ENCODE measurements at regions of chr5 and their contacts with region 1.

Region 1: DNA sequence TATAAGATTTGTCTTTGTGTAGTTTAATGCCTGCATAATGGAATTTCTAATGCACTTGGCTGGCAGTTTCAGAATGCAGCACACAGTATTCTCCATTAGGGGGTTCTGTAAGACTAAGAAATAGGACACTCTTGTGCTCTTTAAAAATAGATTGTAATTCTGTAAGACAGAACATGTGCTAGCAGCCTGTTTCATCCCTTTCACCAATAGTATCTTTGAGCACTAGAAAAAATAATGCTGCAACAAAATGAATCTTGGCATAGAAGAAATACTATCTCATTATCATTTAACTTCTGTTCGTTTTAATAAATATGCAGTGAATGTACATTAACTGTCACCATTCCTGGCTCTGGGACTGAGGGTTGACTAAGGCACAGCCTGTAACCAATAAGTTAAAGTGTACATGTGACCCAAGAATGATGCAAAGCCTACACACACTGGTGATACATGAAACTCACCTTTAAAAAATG is 23.8 kb upstream of the ZNF622 start:
- DNase-seq: peak in 2 of 3 donors; percentile 27 to 39
- H3K4me3 ChIP-seq: no peak overlapping the region
- H3K4me3 Mint-ChIP-seq: no peak overlapping the region
- H3K27ac ChIP-seq: no peak overlapping the region
- H3K27ac Mint-ChIP-seq: no peak overlapping the region
- H3K4me1 ChIP-seq: no peaks in the 10 kb centered on the region
- H3K4me1 Mint-ChIP-seq: no peaks in the 10 kb centered on the region
- H3K27me3 ChIP-seq: no peaks in the 10 kb centered on the region
- H3K27me3 Mint-ChIP-seq: peaks cover 0 to 2% (median 1%) of the 10 kb centered on the region in 3 donors
- CTCF ChIP-seq: peak; percentile 61

Region 2: GRCh38 chr5:16508730-16509531 is 19.6 kb after region 1 on chr5:
- intact Hi-C with region 1: no loop called
- DNase-seq: peak; percentile 53 to 81 (median 61)
- H3K4me3 ChIP-seq: peak overlapping the region; percentile 7 to 62 (median 39)
- H3K4me3 Mint-ChIP-seq: peak overlapping the region; percentile 73 to 83
- H3K27ac ChIP-seq: peak overlapping the region; percentile 68 to 79
- H3K27ac Mint-ChIP-seq: peak overlapping the region; percentile 86 to 95 (median 94)
- H3K4me1 ChIP-seq: peaks cover 0 to 11% of the 10 kb centered on the region in 2 donors
- H3K4me1 Mint-ChIP-seq: peaks cover 17% of the 10 kb centered on the region
- H3K27me3 ChIP-seq: no peaks in the 10 kb centered on the region
- H3K27me3 Mint-ChIP-seq: peaks cover 0 to 1% (median 0%) of the 10 kb centered on the region in 3 donors
- CTCF ChIP-seq: no peak

Region 3: DNA sequence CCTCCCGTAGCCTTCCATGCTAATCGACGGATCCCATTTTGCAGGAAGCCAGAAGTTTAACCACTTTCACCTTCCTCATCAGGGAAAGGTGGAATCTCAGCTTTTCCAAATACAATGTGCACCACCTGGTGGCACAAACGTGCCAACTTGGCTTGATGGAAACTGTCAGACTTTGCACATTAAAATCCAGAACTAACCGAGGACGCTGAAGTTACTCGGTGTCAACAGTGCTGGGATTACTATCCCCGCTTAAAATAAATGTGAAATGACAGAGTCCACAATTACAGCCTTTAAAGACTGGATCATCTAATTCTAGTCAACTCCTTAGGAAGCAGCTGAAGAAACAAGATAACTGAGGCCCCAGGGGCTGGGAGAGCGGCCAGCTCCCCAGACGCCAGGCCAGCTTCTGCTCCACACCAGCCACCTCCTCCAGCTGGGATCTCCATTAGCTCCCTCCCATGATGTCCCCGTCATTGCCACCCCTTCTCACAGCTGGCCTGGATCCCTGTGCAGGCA is 177.6 kb after region 1 on chr5:
- intact Hi-C with region 1: loop called (anchors 5 to 10 kb)
- DNase-seq: peak; percentile 6 to 18 (median 14)
- H3K4me3 ChIP-seq: no peak overlapping the region
- H3K4me3 Mint-ChIP-seq: no peak overlapping the region
- H3K27ac ChIP-seq: no peak overlapping the region
- H3K27ac Mint-ChIP-seq: peak overlapping the region in 1 of 7 donors; percentile 4
- H3K4me1 ChIP-seq: no peaks in the 10 kb centered on the region
- H3K4me1 Mint-ChIP-seq: no peaks in the 10 kb centered on the region
- H3K27me3 ChIP-seq: no peaks in the 10 kb centered on the region
- H3K27me3 Mint-ChIP-seq: peaks cover 1 to 3% (median 2%) of the 10 kb centered on the region in 3 donors
- CTCF ChIP-seq: peak; percentile 62

Measured in CD14-positive monocyte (primary cell).